Posterior cingulate gyrus (tissue), 11 donors: ENCODE measurements at regions of chr12 and their contacts with region 1.

Region 1: DNA sequence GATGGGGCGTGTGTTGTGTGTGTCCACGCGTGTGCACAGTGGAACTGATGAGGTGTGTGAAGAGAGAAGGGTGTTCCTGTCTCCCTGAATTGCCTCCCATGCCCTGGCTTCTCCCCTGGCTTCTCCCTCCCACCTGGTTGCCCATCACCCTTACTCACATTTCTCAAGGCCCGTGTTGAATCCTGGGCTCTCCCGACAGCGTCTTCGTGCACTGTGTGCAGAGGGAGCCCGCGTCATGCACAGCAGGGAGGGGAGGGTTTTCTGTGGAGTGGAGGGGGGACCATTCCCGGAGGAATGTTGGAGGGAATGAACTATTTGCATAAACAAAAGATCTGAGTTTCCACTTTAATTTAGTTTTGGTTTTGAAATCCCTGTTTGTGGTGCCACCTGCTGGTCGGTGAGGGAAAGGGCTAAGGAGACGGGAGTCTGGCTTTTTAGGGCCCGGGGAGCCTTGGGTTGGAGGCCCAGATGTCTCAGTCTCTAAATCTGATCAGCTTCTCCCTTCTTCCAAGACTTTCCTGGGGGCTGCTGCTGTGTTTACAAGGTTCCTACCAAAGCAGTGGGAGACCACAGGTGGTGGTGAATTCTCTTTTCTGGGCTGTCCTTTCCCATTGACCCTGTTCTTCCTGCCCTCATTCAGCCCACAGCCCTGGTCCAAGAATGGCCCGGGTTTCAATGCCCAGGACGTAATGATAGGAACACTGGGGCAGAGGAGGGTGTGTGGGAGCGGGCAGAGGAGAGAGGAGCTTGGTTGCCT is at the start of gene C1R:
- DNase-seq: peak in 7 of 10 donors; percentile 63 to 92 (median 69)

Region 2: GRCh38 chr12:7018350-7019042 is 73.9 kb before region 1 on chr12 and contains the start of gene LPCAT3:
- intact Hi-C with region 1: loop called (anchors 5 kb)
- DNase-seq: peak; percentile 93 to 100 (median 98)